Cardiac septum (tissue), 1 donor: ENCODE measurements at regions of chr2 and their contacts with region 1.

Region 1: DNA sequence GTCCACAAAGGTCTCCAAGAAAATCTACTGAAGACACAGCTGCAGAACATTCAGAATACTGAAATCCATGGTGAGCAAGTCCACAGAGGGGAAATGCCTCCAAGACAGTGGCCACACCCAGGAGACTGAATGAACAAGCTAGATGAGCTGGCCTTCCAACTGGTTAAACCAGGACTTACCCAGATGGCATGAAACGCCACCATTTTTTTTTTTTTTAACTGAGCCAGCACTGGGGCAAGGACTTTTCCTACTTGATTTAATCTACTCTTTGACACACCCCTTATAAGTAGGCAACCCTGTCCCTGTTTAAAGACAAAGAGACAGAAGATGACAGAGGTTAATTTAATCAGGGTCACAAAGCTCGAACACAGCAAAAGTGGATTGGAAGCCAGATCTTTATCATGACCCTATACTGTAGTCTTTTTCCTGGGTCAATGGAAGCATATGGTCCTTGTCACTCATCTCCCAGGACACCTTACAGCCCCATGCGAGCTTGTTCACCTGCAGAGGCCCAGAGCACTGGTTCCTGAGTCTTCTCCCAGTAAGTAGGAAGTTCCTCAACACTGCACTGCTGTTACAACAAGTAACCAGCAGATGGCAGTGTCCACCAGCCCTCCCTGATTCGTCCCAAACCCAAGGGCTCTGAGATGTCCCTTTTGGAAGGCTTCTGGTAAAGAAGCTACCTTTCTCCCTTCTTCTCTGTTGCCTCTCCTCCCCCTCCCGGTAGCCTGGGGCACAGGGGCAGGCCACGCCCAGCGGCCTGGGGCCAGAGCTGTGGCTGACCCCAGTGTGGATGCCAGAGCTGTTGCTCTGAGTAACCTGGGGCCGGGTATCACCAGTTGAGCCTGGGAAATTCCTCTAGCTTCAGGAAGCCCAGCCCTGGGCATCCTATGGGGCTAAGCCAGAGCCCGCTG is 5.6 kb upstream of the GDF7 start:
- DNase-seq: peak; percentile 84

Region 2: GRCh38 chr2:20822535-20823490 is 161.5 kb after region 1 on chr2 and contains the start of gene LDAH:
- intact Hi-C with region 1: loop called (anchors 10 kb)
- DNase-seq: peak; percentile 90
- total RNA-seq, gene LDAH: 6.8 TPM

Region 3: GRCh38 chr2:20962939-20963557 is 301.7 kb after region 1 on chr2:
- intact Hi-C with region 1: loop called (anchors 1 kb)
- DNase-seq: peak; percentile 79

Region 4: GRCh38 chr2:21118302-21118920 is 457.1 kb after region 1 on chr2:
- intact Hi-C with region 1: loop called (anchors 10 kb)
- DNase-seq: no peak